ENCODE measurements at regions of chr11 and their contacts with region 1.

Region 1: GRCh38 chr11:3109921-3110706 is 52.9 kb upstream of the CARS1 start:
- DNase-seq: peak; percentile 64
- H3K4me3 Mint-ChIP-seq: no peak overlapping the region
- H3K27ac Mint-ChIP-seq: no peak overlapping the region
- H3K4me1 Mint-ChIP-seq: no peaks in the 10 kb centered on the region
- H3K27me3 Mint-ChIP-seq: no peaks in the 10 kb centered on the region

Region 2: GRCh38 chr11:2888266-2888968 is 221.7 kb before region 1 on chr11:
- CTCF ChIA-PET with region 1: no interaction called
- intact Hi-C with region 1: no loop called
- DNase-seq: peak; percentile 93
- H3K4me3 Mint-ChIP-seq: no peak overlapping the region
- H3K27ac Mint-ChIP-seq: no peak overlapping the region
- H3K4me1 Mint-ChIP-seq: peaks cover 16% of the 10 kb centered on the region
- H3K27me3 Mint-ChIP-seq: no peaks in the 10 kb centered on the region

Region 3: GRCh38 chr11:3164979-3165814 is 55.1 kb after region 1 on chr11 and contains the start of gene OSBPL5:
- CTCF ChIA-PET with region 1: interaction called, 3 read pairs
- intact Hi-C with region 1: loop called (anchors 2 kb)
- DNase-seq: peak; percentile 68
- H3K4me3 Mint-ChIP-seq: peak within 1 kb of the TSS; percentile 61
- H3K27ac Mint-ChIP-seq: no peak within 1 kb of the TSS
- H3K4me1 Mint-ChIP-seq: peaks cover 29% of the 10 kb centered on the region
- H3K27me3 Mint-ChIP-seq: peaks cover 33% of the 10 kb centered on the region
- total RNA-seq, gene OSBPL5: 3.5 to 3.9 TPM

Region 4: DNA sequence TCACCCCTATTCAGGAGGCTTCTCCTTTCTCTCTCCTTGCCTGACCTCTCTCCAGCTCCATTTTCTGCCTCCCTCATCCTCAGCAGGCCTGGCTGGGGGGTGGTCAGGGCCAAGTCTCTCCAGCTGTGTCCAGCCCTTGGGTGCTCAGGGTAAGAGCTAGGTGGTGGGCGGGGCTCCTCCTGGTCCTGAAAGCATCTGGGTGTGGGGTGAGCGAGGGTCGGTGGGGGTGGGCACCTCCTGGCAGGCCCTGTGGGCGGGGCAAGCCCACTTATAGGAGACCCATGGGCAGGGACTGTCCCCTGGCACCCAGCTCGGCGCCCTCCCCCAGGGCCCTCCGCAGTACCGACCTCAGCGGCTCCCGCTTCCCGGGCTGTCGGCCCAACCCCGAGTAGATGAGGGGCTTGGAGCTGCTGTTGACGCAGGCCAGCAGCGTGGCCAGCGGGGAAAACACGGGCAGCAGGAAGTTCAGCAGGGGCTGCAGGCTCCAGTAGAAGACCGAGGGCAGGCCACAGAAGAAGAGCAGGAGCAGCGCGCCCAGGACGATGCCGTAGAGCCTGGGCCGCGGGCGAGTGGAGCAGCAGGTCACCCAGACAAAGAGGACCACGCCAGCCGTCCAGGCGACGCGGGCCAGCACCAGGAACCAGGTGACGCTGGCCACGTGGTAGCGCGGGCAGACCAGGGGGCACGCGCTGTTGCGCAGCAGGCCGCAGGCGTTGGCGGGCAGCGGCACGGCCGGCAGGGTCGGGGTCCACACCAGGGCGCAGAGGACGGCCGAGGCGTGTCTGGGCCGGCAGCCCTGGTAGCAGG is 107.8 kb after region 1 on chr11:
- CTCF ChIA-PET with region 1: interaction called, 17 read pairs
- intact Hi-C with region 1: loop called (anchors 1 kb)
- DNase-seq: no peak
- H3K4me3 Mint-ChIP-seq: no peak overlapping the region
- H3K27ac Mint-ChIP-seq: no peak overlapping the region
- H3K4me1 Mint-ChIP-seq: peaks cover 7% of the 10 kb centered on the region
- H3K27me3 Mint-ChIP-seq: peaks cover 10% of the 10 kb centered on the region